ENCODE measurements at regions of chr2 and their contacts with region 1.

Region 1: DNA sequence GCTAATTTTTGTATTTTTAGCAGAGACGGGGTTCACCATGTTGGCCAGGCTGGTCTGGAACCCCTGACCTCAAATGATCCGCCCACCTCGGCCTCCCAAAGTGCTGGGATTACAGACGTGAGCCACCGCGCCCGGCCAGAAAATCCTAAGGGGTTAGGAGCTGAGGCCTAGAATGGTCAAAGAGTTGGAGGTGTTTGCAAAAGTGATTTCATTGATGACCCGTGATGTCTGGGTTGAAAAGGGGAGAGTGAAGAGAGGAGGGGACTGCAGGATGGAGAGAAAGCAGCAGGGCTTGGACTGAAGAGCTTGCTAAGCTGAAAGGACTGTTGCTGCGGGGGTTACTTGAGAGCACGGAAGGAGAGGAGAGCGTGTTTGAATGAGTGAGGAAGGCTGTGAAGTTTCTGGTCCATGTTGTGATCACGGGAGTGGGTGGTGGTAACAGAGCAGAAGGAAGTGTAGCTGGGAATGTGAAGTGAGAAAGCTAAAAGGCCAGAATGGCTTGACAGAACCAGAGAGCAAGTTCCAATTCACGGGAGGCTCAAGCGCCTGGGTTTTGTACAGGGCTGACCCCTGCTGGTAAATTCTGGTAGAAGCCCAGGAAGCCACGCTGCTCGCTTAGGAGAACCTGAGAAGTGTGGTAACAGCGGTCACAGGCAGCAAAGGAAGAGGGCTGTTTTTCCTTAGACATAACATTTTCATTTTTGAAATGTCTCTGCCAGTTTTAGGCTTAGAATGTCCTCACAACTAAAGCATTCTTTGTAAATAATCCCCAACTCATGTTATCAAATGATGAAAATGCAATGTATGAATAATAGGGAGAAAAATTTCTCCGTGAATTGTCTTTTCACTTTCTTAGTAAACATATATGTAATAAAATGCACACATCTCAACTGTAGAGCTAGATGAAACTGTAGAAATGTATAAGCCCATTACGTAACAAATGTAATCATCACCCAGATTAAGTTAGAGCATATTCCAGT is 40.5 kb upstream of the ACTR2 start:
- DNase-seq: peak; percentile 88
- ATAC-seq: peak; percentile 90
- H3K4me3 ChIP-seq: peak overlapping the region; percentile 62 to 75 (median 72)
- H3K27ac ChIP-seq: peak overlapping the region; percentile 64
- H3K4me1 ChIP-seq: peaks cover 33% of the 10 kb centered on the region
- H3K27me3 ChIP-seq: peaks cover 0 to 9% of the 10 kb centered on the region in 2 experiments; a peak in 4 of 5 replicates
- CTCF ChIP-seq: peak; percentile 97
- EP300 ChIP-seq: peak; percentile 20 to 23; a peak in 1 of 4 replicates
- POLR2A ChIP-seq: no peak
- RAD21 ChIP-seq: peak; percentile 92

Region 2: GRCh38 chr2:64737547-64737946 is 449.6 kb before region 1 on chr2:
- CTCF ChIA-PET with region 1: no interaction called
- POLR2A ChIA-PET with region 1: no interaction called
- in situ Hi-C with region 1: no loop called
- intact Hi-C with region 1: no loop called
- DNase-seq: no peak
- ATAC-seq: no peak
- H3K4me3 ChIP-seq: no peak overlapping the region
- H3K27ac ChIP-seq: no peak overlapping the region
- H3K4me1 ChIP-seq: peaks cover 15% of the 10 kb centered on the region
- H3K27me3 ChIP-seq: no peaks in the 10 kb centered on the region
- CTCF ChIP-seq: no peak
- EP300 ChIP-seq: no peak
- POLR2A ChIP-seq: no peak
- RAD21 ChIP-seq: no peak

Region 3: GRCh38 chr2:64914735-64915509 is 272.2 kb before region 1 on chr2:
- CTCF ChIA-PET with region 1: interaction called, 6 read pairs
- POLR2A ChIA-PET with region 1: interaction called, 5 read pairs
- in situ Hi-C with region 1: loop called (anchors 25 kb)
- intact Hi-C with region 1: loop called (anchors 2 kb)
- DNase-seq: no peak
- ATAC-seq: no peak
- H3K4me3 ChIP-seq: no peak overlapping the region
- H3K27ac ChIP-seq: no peak overlapping the region
- H3K4me1 ChIP-seq: peaks cover 6% of the 10 kb centered on the region; the same call in 1 of the 2 replicates
- H3K27me3 ChIP-seq: 0 out of 5 replicates have a peak, but pooled peaks cover 0 to 4% of the 10 kb centered on the region in 2 experiments
- CTCF ChIP-seq: no peak
- EP300 ChIP-seq: no peak
- POLR2A ChIP-seq: no peak
- RAD21 ChIP-seq: no peak

Region 4: GRCh38 chr2:65064728-65065552 is 122.2 kb before region 1 on chr2:
- CTCF ChIA-PET with region 1: interaction called, 7 read pairs
- POLR2A ChIA-PET with region 1: no interaction called
- in situ Hi-C with region 1: loop called (anchors 5 kb)
- intact Hi-C with region 1: loop called (anchors 1 kb)
- DNase-seq: peak; percentile 36
- ATAC-seq: peak; percentile 50
- H3K4me3 ChIP-seq: no peak overlapping the region
- H3K27ac ChIP-seq: no peak overlapping the region
- H3K4me1 ChIP-seq: peaks cover 73% of the 10 kb centered on the region
- H3K27me3 ChIP-seq: no peaks in the 10 kb centered on the region
- CTCF ChIP-seq: peak; percentile 57
- EP300 ChIP-seq: 0 out of 4 replicates have a peak, but pooled peaks of 1 of the 2 experiments have one; percentile 10
- POLR2A ChIP-seq: no peak
- RAD21 ChIP-seq: 0 out of 2 replicates have a peak, but pooled peaks have one; percentile 13

Region 5: DNA sequence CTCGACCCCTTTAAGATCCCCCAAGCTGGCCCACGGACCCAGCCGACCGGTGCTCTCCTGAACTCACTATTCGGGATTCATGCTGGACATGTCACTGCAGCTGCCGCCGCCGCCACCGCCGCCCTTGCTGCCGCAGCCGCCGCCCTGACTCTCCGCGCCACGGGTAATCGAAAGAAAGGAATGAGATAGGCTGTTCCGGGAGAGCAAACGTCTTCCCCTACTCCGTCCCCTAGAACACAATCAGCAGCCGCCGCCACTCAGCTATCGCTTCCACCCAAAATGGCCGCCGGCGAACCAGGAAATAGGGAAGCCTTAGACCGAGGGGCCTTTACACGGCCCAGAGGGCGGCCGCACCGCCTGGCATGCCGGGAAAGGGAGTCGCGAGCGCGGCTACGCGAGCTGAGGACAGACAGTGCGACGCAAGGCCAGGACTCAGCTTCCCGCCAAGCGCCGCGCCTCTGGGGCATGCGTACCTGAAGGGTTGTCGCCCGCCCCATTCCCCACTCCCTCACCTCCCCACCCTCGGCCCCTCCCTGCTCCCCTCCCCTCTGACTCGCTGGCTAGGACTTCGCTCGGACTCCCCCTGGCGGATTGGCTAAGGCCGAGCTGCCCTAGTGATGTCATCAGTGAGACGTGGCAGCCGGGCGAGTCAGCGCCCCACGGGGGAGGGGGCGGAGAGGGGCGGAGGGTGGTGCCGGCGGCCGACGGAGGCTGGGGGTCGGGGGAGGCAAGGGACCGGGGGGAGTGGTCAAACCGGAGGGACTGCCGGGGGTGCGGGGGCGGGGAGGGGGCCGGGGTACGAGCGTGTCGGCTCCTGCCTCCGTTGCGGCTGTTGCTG is 57.1 kb before region 1 on chr2 and contains the start of gene RAB1A:
- CTCF ChIA-PET with region 1: no interaction called
- POLR2A ChIA-PET with region 1: interaction called, 25 read pairs
- in situ Hi-C with region 1: no loop called
- intact Hi-C with region 1: loop called (anchors 2 kb)
- DNase-seq: peak; percentile 99
- ATAC-seq: peak; percentile 98
- H3K4me3 ChIP-seq: peak within 1 kb of the TSS; percentile 89 to 98 (median 97)
- H3K27ac ChIP-seq: peak within 1 kb of the TSS; percentile 95
- H3K4me1 ChIP-seq: peaks cover 69% of the 10 kb centered on the region
- H3K27me3 ChIP-seq: peaks cover 0 to 4% of the 10 kb centered on the region in 2 experiments; a peak in 1 of 5 replicates
- CTCF ChIP-seq: peak; percentile 80
- EP300 ChIP-seq: no peak
- POLR2A ChIP-seq: peak; percentile 88 to 93
- RAD21 ChIP-seq: no peak
- total RNA-seq, gene RAB1A: 206 and 311 TPM in 2 replicates

Region 6: GRCh38 chr2:65198737-65199136 is 11.6 kb after region 1 on chr2:
- CTCF ChIA-PET with region 1: no interaction called
- POLR2A ChIA-PET with region 1: no interaction called
- in situ Hi-C with region 1: no loop called
- intact Hi-C with region 1: no loop called
- DNase-seq: no peak
- ATAC-seq: peak; percentile 23; the same call in 2 of the 3 replicates
- H3K4me3 ChIP-seq: no peak overlapping the region
- H3K27ac ChIP-seq: no peak overlapping the region
- H3K4me1 ChIP-seq: no peaks in the 10 kb centered on the region
- H3K27me3 ChIP-seq: peaks cover 0 to 10% of the 10 kb centered on the region in 2 experiments; a peak in 4 of 5 replicates
- CTCF ChIP-seq: no peak
- EP300 ChIP-seq: no peak
- POLR2A ChIP-seq: no peak
- RAD21 ChIP-seq: no peak

Region 7: GRCh38 chr2:65227425-65228262 is 40.5 kb after region 1 on chr2 and contains the start of gene ACTR2:
- CTCF ChIA-PET with region 1: no interaction called
- POLR2A ChIA-PET with region 1: interaction called, 17 read pairs
- in situ Hi-C with region 1: no loop called
- intact Hi-C with region 1: loop called (anchors 2 kb)
- DNase-seq: peak; percentile 95
- ATAC-seq: peak; percentile 97
- H3K4me3 ChIP-seq: peak within 1 kb of the TSS; percentile 76 to 99 (median 98)
- H3K27ac ChIP-seq: peak within 1 kb of the TSS; percentile 94
- H3K4me1 ChIP-seq: peaks cover 44% of the 10 kb centered on the region
- H3K27me3 ChIP-seq: peaks cover 0 to 3% of the 10 kb centered on the region in 2 experiments; a peak in 1 of 5 replicates
- CTCF ChIP-seq: peak; percentile 13; the same call in 1 of the 2 replicates
- EP300 ChIP-seq: peak in 1 of 2 experiments; percentile 29; a peak in 1 of 4 replicates
- POLR2A ChIP-seq: peak; percentile 90 to 95
- RAD21 ChIP-seq: peak; percentile 66
- total RNA-seq, gene ACTR2: 100 and 211 TPM in 2 replicates

Region 8: GRCh38 chr2:65432227-65433190 is 245.3 kb after region 1 on chr2 and contains the start of gene SPRED2:
- CTCF ChIA-PET with region 1: no interaction called
- POLR2A ChIA-PET with region 1: no interaction called
- in situ Hi-C with region 1: no loop called
- intact Hi-C with region 1: no loop called
- DNase-seq: peak; percentile 96
- ATAC-seq: peak; percentile 58
- H3K4me3 ChIP-seq: peak within 1 kb of the TSS; percentile 94 to 98 (median 98)
- H3K27ac ChIP-seq: peak within 1 kb of the TSS; percentile 86
- H3K4me1 ChIP-seq: peaks cover 56% of the 10 kb centered on the region
- H3K27me3 ChIP-seq: no peaks in the 10 kb centered on the region
- CTCF ChIP-seq: peak; percentile 13; the same call in 1 of the 2 replicates
- EP300 ChIP-seq: peak; percentile 73 to 82
- POLR2A ChIP-seq: peak; percentile 73 to 82
- RAD21 ChIP-seq: no peak; the same call in 1 of the 2 replicates
- total RNA-seq, gene SPRED2: 13.0 and 17.7 TPM in 2 replicates

Measured in HepG2 (cell line).